ENCODE measurements at regions of chr1 and their contacts with region 1.

Region 1: GRCh38 chr1:197775282-197776262 is at the start of gene DENND1B:
- DNase-seq: peak; percentile 92
- H3K4me3 ChIP-seq: peak within 1 kb of the TSS; percentile 85
- H3K27ac ChIP-seq: peak within 1 kb of the TSS; percentile 85
- H3K4me1 ChIP-seq: peaks cover 58% of the 10 kb centered on the region
- CTCF ChIP-seq: no peak
- total RNA-seq, gene DENND1B: 11.4 and 17.4 TPM in 2 replicates

Region 2: GRCh38 chr1:197146197-197146889 is 629.2 kb before region 1 on chr1 and contains the start of gene ASPM:
- CTCF ChIA-PET with region 1: no interaction called
- POLR2A ChIA-PET with region 1: no interaction called
- intact Hi-C with region 1: loop called (anchors 10 kb)
- DNase-seq: peak; percentile 95
- H3K4me3 ChIP-seq: peak within 1 kb of the TSS; percentile 88
- H3K27ac ChIP-seq: peak within 1 kb of the TSS; percentile 90
- H3K4me1 ChIP-seq: peaks cover 29% of the 10 kb centered on the region
- CTCF ChIP-seq: no peak
- total RNA-seq, gene ASPM: 88.4 and 88.6 TPM in 2 replicates

Region 3: DNA sequence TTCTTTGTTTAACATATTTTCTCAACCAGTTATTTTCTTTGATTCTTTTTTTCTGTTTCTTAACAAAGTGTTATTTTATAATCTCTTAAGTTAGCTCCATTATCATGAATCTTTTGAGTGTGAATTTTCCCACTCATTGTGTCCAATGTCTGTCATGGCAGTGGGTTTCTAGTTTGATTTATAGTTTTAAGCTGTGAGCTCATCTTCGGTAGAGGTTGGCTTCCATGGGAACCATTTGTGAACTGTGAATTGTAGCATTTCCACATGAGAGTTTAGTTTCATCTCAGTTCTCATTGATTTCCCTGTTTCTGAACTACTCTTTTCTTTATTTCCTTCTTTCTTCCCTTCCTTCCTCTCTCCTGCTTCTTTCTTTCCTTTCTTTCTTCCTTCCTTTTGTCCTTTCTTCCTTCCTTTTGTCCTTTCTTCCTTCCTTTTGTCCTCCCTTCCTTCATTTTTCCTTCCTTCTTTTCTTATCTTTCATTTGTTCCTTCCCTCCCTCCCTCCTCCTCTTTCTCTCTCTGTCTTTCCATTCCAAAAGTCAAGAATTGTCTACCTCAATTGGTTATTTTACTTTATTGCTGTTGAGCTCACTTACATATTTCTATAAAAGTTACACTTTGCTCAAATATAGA is 510.5 kb before region 1 on chr1:
- CTCF ChIA-PET with region 1: no interaction called
- POLR2A ChIA-PET with region 1: no interaction called
- intact Hi-C with region 1: no loop called
- DNase-seq: no peak
- H3K4me3 ChIP-seq: no peak overlapping the region
- H3K27ac ChIP-seq: no peak overlapping the region
- H3K4me1 ChIP-seq: no peaks in the 10 kb centered on the region
- CTCF ChIP-seq: no peak

Region 4: DNA sequence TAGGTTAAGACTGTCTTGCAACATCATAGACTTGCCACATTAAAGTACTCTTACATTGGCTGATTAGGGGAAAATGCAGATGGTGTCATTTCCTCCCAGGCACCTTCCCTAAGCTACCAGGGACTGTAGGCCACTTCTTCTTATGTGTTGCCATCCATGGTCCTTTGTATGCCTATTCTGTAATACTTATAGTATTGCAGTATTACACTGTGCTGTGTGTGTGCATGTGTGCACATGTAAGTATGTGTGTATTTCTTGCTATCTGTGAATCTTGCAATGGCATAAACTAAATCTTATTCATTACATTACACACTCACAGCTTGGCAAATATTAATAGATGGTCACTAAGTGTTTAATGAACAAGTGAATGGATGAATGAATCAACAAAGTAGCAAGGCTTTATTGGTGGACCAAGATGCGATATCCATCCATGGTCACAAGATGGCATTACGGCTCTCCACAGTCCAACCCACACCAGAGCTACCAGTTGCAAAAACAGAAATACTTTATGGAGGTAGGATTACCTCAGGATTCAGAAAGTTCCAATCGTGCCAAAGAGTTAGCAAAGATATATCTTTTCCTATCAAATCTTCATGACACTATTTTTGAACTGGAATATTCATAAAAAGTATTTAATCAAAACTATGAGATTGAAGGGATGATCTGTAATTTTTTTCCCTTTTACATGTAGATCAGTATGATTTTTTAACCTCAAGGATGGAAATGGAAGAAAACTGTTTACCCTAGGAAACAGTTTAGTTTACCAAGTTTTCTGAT is 160.5 kb before region 1 on chr1:
- CTCF ChIA-PET with region 1: no interaction called
- POLR2A ChIA-PET with region 1: interaction called, 3 read pairs
- intact Hi-C with region 1: loop called (anchors 5 kb)
- DNase-seq: peak; percentile 53
- H3K4me3 ChIP-seq: no peak overlapping the region
- H3K27ac ChIP-seq: no peak overlapping the region
- H3K4me1 ChIP-seq: peaks cover 10% of the 10 kb centered on the region
- CTCF ChIP-seq: peak; percentile 92

Region 5: DNA sequence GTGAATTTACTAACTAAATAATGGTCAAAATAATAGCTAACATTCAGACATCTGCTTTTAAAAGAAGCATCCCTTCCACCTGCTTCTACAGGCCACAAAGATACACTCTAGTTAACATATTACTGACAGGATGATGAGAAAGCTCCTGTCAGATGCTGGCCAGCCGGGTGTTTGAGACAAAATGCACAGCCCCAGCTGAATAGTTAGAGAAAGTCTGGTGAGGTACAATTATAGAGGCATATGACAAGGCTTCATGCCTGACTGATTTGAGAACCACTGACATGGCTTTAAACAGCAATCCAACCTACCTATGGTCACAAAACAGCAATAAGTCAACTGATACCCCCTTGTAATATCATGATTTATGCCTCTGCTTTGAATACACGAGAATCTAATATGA is 137.3 kb before region 1 on chr1:
- CTCF ChIA-PET with region 1: interaction called, 3 read pairs
- POLR2A ChIA-PET with region 1: interaction called, 5 read pairs
- intact Hi-C with region 1: loop called (anchors 2 kb)
- DNase-seq: peak; percentile 88
- H3K4me3 ChIP-seq: peak overlapping the region; percentile 39
- H3K27ac ChIP-seq: peak overlapping the region; percentile 92
- H3K4me1 ChIP-seq: peaks cover 40% of the 10 kb centered on the region
- CTCF ChIP-seq: no peak

Region 6: DNA sequence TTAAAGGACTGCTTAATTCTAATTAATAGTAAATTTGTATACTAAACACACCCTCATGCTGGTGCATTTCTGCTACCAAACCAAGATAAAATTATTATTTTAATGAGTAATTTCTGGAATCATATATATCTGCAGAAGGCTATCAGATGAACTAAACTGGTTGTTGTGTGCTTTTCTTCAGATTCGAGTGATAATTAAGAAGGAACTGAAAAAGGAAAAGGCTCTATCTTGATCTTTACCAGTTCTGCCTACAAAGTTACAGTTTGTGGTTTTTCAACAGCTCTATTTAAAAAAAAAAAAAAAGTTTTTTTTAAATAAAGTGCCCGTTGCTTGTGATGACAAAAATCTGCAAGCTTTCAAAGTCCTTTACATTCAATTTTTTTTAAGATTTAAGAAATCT is 14.0 kb before region 1 on chr1:
- CTCF ChIA-PET with region 1: interaction called, 9 read pairs
- POLR2A ChIA-PET with region 1: interaction called, 68 read pairs
- intact Hi-C with region 1: loop called (anchors 1 kb)
- DNase-seq: peak; percentile 63
- H3K4me3 ChIP-seq: peak overlapping the region; percentile 46
- H3K27ac ChIP-seq: peak overlapping the region; percentile 87
- H3K4me1 ChIP-seq: peaks cover 27% of the 10 kb centered on the region
- CTCF ChIP-seq: no peak

Region 7: GRCh38 chr1:197902454-197903195 is 127.1 kb after region 1 on chr1 and contains the start of gene C1orf53:
- CTCF ChIA-PET with region 1: no interaction called
- POLR2A ChIA-PET with region 1: interaction called, 4 read pairs
- intact Hi-C with region 1: loop called (anchors 2 kb)
- DNase-seq: peak; percentile 91
- H3K4me3 ChIP-seq: peak within 1 kb of the TSS; percentile 73
- H3K27ac ChIP-seq: peak within 1 kb of the TSS; percentile 69
- H3K4me1 ChIP-seq: peaks cover 14% of the 10 kb centered on the region
- CTCF ChIP-seq: no peak
- total RNA-seq, gene C1orf53: 4.1 TPM in 1 of 2 replicates, not detected in the other

Region 8: DNA sequence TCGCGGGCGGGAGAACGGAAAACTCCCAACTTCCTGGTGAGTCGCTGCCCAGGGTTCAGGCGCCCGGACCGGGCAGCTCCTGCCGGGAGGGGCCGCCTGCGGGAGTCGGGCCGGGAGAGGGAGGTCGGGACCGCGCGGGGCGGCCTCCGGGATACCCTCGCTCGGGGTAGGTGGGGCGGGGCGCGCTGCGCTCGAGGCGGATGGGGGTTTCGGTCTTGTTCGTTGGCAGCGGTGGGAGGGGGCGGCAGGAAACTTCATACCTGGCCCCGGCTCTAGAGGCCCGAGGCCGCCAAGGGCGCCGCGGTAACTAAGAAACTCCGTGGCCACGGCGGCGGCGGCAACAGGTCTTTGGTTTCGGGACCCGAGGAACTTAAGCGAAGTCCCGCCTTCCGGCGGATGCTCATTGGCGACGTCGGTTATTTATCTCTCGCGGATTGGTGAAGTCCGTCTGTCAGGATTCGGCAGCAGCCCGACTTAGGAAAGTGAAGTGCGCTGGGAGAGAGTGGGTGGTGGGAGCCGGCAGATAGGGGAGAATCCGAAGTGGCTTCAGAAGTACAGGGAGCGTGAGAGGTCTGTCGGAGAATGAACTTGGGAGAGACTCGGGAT is 381.8 kb after region 1 on chr1:
- CTCF ChIA-PET with region 1: no interaction called
- POLR2A ChIA-PET with region 1: no interaction called
- intact Hi-C with region 1: loop called (anchors 5 kb)
- DNase-seq: peak; percentile 91
- H3K4me3 ChIP-seq: peak overlapping the region; percentile 97
- H3K27ac ChIP-seq: peak overlapping the region; percentile 70
- H3K4me1 ChIP-seq: peaks cover 30% of the 10 kb centered on the region
- CTCF ChIP-seq: no peak